ENCODE measurements at regions of chr20 and their contacts with region 1.

Region 1: GRCh38 chr20:45771182-45771759 is 20.4 kb downstream of the WFDC3 start:
- DNase-seq: peak; percentile 87
- ATAC-seq: peak; percentile 85
- H3K4me3 Mint-ChIP-seq: no peak overlapping the region
- H3K27ac Mint-ChIP-seq: no peak overlapping the region
- H3K4me1 Mint-ChIP-seq: peaks cover 6% of the 10 kb centered on the region
- H3K27me3 Mint-ChIP-seq: peaks cover 8% of the 10 kb centered on the region
- CTCF ChIP-seq: peak; percentile 85

Region 2: GRCh38 chr20:45362804-45363610 is 408.3 kb before region 1 on chr20 and contains the start of gene SYS1:
- CTCF ChIA-PET with region 1: interaction called, 13 read pairs
- POLR2A ChIA-PET with region 1: no interaction called
- intact Hi-C with region 1: no loop called
- DNase-seq: peak; percentile 98
- ATAC-seq: peak; percentile 90
- H3K4me3 Mint-ChIP-seq: peak within 1 kb of the TSS; percentile 100
- H3K27ac Mint-ChIP-seq: peak within 1 kb of the TSS; percentile 98
- H3K4me1 Mint-ChIP-seq: peaks cover 48% of the 10 kb centered on the region
- H3K27me3 Mint-ChIP-seq: no peaks in the 10 kb centered on the region
- CTCF ChIP-seq: peak; percentile 89
- total RNA-seq, gene SYS1: 19.6 to 20.7 TPM

Region 3: DNA sequence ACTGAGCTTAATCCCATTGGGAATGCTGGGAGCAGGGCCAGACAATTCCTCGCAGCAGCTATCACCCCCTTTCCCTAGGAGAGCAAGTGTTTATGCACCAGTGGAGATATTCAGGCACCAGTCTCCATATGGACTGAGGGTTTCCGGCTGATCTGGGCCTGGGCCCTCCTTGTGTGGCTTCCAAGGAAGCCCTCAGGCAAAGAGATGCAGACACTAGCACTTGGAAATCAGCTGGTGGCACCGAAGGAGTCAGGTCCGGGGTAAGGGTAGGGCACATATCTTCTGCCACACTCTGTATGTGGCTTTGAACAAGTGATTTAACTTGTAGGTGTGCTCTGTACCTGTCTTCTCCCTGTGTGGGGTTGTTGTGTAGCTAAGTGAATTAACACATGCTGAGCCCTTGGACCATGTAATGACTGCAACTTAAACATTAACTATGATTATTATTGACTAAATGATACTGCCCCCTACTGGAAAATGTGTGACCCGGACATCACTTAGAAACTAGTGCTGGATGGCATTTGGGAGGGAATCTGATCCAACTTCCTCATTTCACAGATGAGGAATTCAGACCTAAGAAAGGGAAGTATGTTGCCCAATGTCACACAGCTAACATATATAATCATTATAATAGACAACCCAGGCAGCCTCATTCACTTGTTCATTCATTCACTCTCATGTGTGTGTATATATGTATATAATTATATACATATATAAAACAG is 321.0 kb before region 1 on chr20:
- CTCF ChIA-PET with region 1: interaction called, 53 read pairs
- POLR2A ChIA-PET with region 1: no interaction called
- intact Hi-C with region 1: no loop called
- DNase-seq: peak; percentile 28
- ATAC-seq: peak; percentile 66
- H3K4me3 Mint-ChIP-seq: no peak overlapping the region
- H3K27ac Mint-ChIP-seq: no peak overlapping the region
- H3K4me1 Mint-ChIP-seq: peaks cover 2% of the 10 kb centered on the region
- H3K27me3 Mint-ChIP-seq: peaks cover 2% of the 10 kb centered on the region
- CTCF ChIP-seq: peak; percentile 79

Region 4: GRCh38 chr20:45484676-45485075 is 286.6 kb before region 1 on chr20:
- CTCF ChIA-PET with region 1: interaction called, 11 read pairs
- POLR2A ChIA-PET with region 1: no interaction called
- intact Hi-C with region 1: no loop called
- DNase-seq: no peak
- ATAC-seq: no peak
- H3K4me3 Mint-ChIP-seq: no peak overlapping the region
- H3K27ac Mint-ChIP-seq: no peak overlapping the region
- H3K4me1 Mint-ChIP-seq: no peaks in the 10 kb centered on the region
- H3K27me3 Mint-ChIP-seq: peaks cover 35% of the 10 kb centered on the region
- CTCF ChIP-seq: no peak

Region 5: DNA sequence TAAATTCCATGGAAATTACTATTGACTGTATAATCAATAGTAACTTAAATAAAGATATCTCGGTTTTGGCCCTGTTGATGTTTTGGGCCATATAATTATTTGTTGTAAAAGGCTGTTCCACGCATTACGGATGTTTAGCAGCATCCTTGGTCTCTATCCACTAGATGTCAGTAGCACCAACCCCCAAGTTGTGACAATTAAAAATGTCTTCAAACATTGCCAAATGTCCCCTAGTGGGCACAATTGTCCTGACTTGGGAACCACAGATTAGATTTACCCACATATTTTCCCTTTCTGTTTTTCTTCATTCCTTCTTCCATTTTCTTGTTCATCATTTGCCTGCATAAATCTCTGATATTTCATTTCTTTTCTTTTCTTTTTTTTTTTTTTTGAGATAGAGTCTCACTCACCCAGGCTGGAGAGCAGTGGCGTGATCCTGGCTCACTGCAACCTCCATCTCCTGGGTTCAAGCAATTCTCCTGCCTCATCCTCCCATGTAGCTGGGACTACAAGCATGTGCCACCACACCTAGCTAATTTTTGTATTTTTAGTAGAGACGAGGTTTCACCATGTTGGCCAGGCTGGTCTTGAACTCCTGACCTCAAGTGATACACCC is 178.6 kb before region 1 on chr20:
- CTCF ChIA-PET with region 1: interaction called, 67 read pairs
- POLR2A ChIA-PET with region 1: interaction called, 3 read pairs
- intact Hi-C with region 1: loop called (anchors 5 kb)
- DNase-seq: peak; percentile 48
- ATAC-seq: peak; percentile 65
- H3K4me3 Mint-ChIP-seq: no peak overlapping the region
- H3K27ac Mint-ChIP-seq: no peak overlapping the region
- H3K4me1 Mint-ChIP-seq: peaks cover 2% of the 10 kb centered on the region
- H3K27me3 Mint-ChIP-seq: peaks cover 25% of the 10 kb centered on the region
- CTCF ChIP-seq: peak; percentile 85

Region 6: GRCh38 chr20:45752746-45753145 is 18.5 kb before region 1 on chr20:
- CTCF ChIA-PET with region 1: interaction called, 14 read pairs
- POLR2A ChIA-PET with region 1: no interaction called
- intact Hi-C with region 1: no loop called
- DNase-seq: peak; percentile 54
- ATAC-seq: peak; percentile 79
- H3K4me3 Mint-ChIP-seq: no peak overlapping the region
- H3K27ac Mint-ChIP-seq: peak overlapping the region; percentile 53
- H3K4me1 Mint-ChIP-seq: peaks cover 21% of the 10 kb centered on the region
- H3K27me3 Mint-ChIP-seq: peaks cover 20% of the 10 kb centered on the region
- CTCF ChIP-seq: no peak

Region 7: GRCh38 chr20:45867819-45868176 is 96.5 kb after region 1 on chr20:
- CTCF ChIA-PET with region 1: no interaction called
- POLR2A ChIA-PET with region 1: no interaction called
- intact Hi-C with region 1: no loop called
- DNase-seq: no peak
- ATAC-seq: no peak
- H3K4me3 Mint-ChIP-seq: no peak overlapping the region
- H3K27ac Mint-ChIP-seq: no peak overlapping the region
- H3K4me1 Mint-ChIP-seq: no peaks in the 10 kb centered on the region
- H3K27me3 Mint-ChIP-seq: no peaks in the 10 kb centered on the region
- CTCF ChIP-seq: no peak

Region 8: GRCh38 chr20:45910670-45911485 is 139.6 kb after region 1 on chr20:
- CTCF ChIA-PET with region 1: no interaction called
- POLR2A ChIA-PET with region 1: no interaction called
- intact Hi-C with region 1: no loop called
- DNase-seq: peak; percentile 100
- ATAC-seq: peak; percentile 96
- H3K4me3 Mint-ChIP-seq: peak overlapping the region; percentile 86
- H3K27ac Mint-ChIP-seq: peak overlapping the region; percentile 79
- H3K4me1 Mint-ChIP-seq: peaks cover 17% of the 10 kb centered on the region
- H3K27me3 Mint-ChIP-seq: peaks cover 8% of the 10 kb centered on the region
- CTCF ChIP-seq: no peak